HCT116 (cell line): ENCODE measurements at regions of chr3 and their contacts with region 1.

Region 1: DNA sequence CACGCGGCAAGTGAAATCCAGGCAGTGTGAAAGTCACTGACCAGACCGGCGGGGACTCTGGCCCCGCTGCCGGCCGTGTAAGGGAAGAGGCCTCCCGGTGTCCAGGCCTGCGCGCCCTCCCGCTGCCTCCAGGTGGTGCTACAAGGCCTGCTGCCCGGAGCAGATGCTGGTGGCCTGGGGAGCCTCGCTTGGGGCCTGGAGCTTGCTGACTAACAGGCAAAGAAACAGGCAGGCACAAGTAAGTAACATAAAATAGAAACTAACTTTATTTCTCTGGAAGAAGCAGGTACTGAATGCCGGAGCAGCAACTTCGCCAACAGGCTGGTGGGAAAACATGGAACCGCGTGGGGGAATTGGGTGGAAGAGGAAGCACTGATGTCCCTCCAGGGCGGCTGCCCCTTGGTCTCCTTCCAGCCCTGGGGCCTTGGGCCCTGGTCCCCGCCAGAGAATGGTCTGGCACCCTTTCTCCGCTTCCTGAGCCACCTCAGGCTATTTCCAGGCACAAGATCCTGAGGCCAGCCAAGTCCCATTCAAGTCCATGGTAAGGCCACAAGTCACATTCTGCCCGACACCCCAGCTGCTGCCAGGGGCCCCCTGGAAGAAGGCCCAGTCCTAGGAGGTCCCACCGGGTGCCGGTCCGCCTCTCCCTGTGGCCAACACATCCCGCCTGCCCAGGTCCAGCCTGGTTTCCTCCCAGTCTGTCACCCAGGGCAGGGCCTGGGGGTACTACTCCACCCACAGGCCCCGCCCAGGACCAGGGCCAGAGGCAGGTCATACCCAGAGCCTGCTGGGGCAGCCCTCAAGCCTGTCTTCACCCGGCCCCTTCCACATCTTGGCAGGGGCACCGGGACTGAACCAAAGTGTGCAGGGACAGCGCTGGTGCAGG is 45.0 kb downstream of the TNK2 start:
- DNase-seq: peak; percentile 42
- ATAC-seq: peak; percentile 97
- H3K4me3 ChIP-seq: no peak overlapping the region
- H3K27ac ChIP-seq: peak overlapping the region; percentile 25; the same call in 1 of the 2 replicates
- H3K4me1 ChIP-seq: peaks cover 0 to 21% of the 10 kb centered on the region in 2 experiments; a peak in 2 of 4 replicates
- H3K27me3 ChIP-seq: no peaks in the 10 kb centered on the region
- CTCF ChIP-seq: peak; percentile 88 to 97 (median 97)
- POLR2A ChIP-seq: no peak
- RAD21 ChIP-seq: peak; percentile 97

Region 2: GRCh38 chr3:195282961-195283360 is 580.4 kb before region 1 on chr3:
- CTCF ChIA-PET with region 1: no interaction called
- POLR2A ChIA-PET with region 1: no interaction called
- RAD21 ChIA-PET with region 1: no interaction called
- intact Hi-C with region 1: no loop called
- DNase-seq: no peak
- ATAC-seq: no peak
- H3K4me3 ChIP-seq: no peak overlapping the region
- H3K27ac ChIP-seq: no peak overlapping the region
- H3K4me1 ChIP-seq: no peaks in the 10 kb centered on the region
- H3K27me3 ChIP-seq: no peaks in the 10 kb centered on the region
- CTCF ChIP-seq: no peak
- POLR2A ChIP-seq: no peak
- RAD21 ChIP-seq: no peak

Region 3: DNA sequence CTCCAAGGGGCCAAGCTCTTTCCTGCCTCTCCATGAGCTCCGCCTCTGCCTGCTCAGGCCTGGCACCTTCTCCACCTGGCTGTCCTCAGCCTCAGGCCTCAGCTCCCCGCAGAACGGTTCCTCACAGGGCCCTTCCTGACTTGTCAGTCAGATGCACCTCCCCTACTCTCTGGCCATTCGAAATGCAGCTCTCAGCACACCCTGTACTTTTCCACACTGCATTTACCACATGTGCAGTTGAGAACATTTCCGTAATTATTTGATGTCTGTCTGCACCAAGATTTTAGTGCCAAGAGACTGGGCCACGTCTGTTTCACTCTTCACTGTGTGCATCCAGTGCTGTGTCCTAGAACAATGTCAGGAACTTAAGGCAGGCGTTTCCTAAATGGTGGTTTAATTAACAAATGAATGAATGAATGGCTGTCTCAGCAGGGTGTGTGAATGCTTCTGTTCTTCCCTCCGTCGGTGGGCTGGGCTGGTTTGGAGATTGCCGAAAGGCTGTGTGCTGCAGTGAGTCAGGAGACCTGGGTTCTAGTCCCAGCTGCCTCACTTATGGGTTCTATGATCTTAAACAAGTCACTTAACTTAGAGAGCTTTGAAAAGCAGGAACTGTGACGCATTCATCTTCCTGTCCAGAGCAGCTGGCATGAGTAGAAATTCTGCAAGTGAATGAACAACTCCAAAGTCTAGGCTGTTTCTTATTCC is 57.0 kb before region 1 on chr3:
- CTCF ChIA-PET with region 1: no interaction called
- POLR2A ChIA-PET with region 1: no interaction called
- RAD21 ChIA-PET with region 1: no interaction called
- intact Hi-C with region 1: no loop called
- DNase-seq: no peak
- ATAC-seq: no peak; the same call in 1 of the 2 replicates
- H3K4me3 ChIP-seq: no peak overlapping the region
- H3K27ac ChIP-seq: no peak overlapping the region
- H3K4me1 ChIP-seq: peaks cover 0 to 6% of the 10 kb centered on the region in 2 experiments; a peak in 1 of 4 replicates
- H3K27me3 ChIP-seq: peaks cover 6% of the 10 kb centered on the region; the same call in 1 of the 2 replicates
- CTCF ChIP-seq: no peak
- POLR2A ChIP-seq: no peak
- RAD21 ChIP-seq: no peak

Region 4: GRCh38 chr3:195914648-195915473 is 51.5 kb after region 1 on chr3:
- CTCF ChIA-PET with region 1: interaction called, 21 read pairs
- POLR2A ChIA-PET with region 1: no interaction called
- RAD21 ChIA-PET with region 1: no interaction called
- intact Hi-C with region 1: loop called (anchors 1 kb)
- DNase-seq: peak; percentile 98
- ATAC-seq: peak; percentile 93
- H3K4me3 ChIP-seq: peak overlapping the region; percentile 30 to 41
- H3K27ac ChIP-seq: peak overlapping the region; percentile 67
- H3K4me1 ChIP-seq: peaks cover 15 to 41% of the 10 kb centered on the region in 2 experiments
- H3K27me3 ChIP-seq: no peaks in the 10 kb centered on the region
- CTCF ChIP-seq: peak in 2 of 3 experiments; percentile 96 to 98; a peak in 4 of 6 replicates
- POLR2A ChIP-seq: peak; percentile 48
- RAD21 ChIP-seq: no peak